ENCODE measurements at regions of chr16 and their contacts with region 1.

Region 1: GRCh38 chr16:72923757-72924156 is 124.2 kb downstream of the ZFHX3 start:
- DNase-seq: no peak
- H3K4me3 ChIP-seq: no peak overlapping the region
- H3K27ac ChIP-seq: peak overlapping the region; percentile 79 to 92
- H3K4me1 ChIP-seq: peaks cover 35% of the 10 kb centered on the region
- H3K27me3 ChIP-seq: no peaks in the 10 kb centered on the region
- CTCF ChIP-seq: no peak
- POLR2A ChIP-seq: no peak

Region 2: GRCh38 chr16:72938795-72939164 is 15.0 kb after region 1 on chr16:
- intact Hi-C with region 1: loop called (anchors 1 kb)
- DNase-seq: peak; percentile 81
- H3K4me3 ChIP-seq: no peak overlapping the region
- H3K27ac ChIP-seq: peak overlapping the region; percentile 90 to 92
- H3K4me1 ChIP-seq: peaks cover 33% of the 10 kb centered on the region
- H3K27me3 ChIP-seq: no peaks in the 10 kb centered on the region
- CTCF ChIP-seq: no peak
- POLR2A ChIP-seq: no peak